Mammary epithelial cell (primary cell): ENCODE measurements at regions of chr16 and their contacts with region 1.

Region 1: GRCh38 chr16:48901712-48902374 is 291.9 kb upstream of the N4BP1 start:
- DNase-seq: no peak
- H3K4me3 ChIP-seq: no peak overlapping the region
- H3K27ac ChIP-seq: no peak overlapping the region
- H3K4me1 ChIP-seq: no peaks in the 10 kb centered on the region
- H3K27me3 ChIP-seq: peaks cover 1% of the 10 kb centered on the region
- CTCF ChIP-seq: no peak

Region 2: DNA sequence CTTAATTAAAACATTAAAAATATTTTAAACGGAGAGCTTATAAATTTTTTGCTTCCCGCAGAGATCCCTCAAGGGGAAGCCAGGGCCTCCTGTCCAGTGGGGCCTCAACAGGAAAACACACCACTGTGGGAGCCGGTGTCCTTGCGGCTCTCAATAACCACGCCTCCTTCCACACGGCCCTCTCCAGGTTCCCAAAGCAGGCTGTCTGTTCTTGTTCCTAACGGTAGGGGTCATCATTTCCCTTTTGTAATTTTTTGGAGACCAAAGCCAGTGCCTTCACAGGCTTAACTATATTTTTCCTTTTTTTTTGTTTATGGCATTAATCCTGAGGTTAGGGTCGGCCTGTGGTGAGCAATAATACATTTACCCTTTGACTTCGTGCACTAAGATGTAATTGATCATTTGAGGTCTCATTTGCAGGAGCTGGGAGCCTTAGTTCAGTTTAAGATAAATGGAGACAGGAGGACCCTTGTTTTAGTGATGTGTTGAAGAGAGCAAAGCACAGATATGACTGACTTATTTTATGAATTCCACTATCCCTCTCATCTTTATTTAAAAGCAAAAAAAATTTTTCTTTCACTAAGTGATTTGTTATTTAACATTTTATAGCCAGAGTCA is 214.3 kb before region 1 on chr16:
- CTCF ChIA-PET with region 1: no interaction called
- dilution Hi-C with region 1: no loop called
- in situ Hi-C with region 1: no loop called
- intact Hi-C with region 1: loop called (anchors 10 kb)
- DNase-seq: peak; percentile 60
- H3K4me3 ChIP-seq: no peak overlapping the region
- H3K27ac ChIP-seq: no peak overlapping the region
- H3K4me1 ChIP-seq: no peaks in the 10 kb centered on the region
- H3K27me3 ChIP-seq: no peaks in the 10 kb centered on the region
- CTCF ChIP-seq: peak; percentile 81 to 87

Region 3: DNA sequence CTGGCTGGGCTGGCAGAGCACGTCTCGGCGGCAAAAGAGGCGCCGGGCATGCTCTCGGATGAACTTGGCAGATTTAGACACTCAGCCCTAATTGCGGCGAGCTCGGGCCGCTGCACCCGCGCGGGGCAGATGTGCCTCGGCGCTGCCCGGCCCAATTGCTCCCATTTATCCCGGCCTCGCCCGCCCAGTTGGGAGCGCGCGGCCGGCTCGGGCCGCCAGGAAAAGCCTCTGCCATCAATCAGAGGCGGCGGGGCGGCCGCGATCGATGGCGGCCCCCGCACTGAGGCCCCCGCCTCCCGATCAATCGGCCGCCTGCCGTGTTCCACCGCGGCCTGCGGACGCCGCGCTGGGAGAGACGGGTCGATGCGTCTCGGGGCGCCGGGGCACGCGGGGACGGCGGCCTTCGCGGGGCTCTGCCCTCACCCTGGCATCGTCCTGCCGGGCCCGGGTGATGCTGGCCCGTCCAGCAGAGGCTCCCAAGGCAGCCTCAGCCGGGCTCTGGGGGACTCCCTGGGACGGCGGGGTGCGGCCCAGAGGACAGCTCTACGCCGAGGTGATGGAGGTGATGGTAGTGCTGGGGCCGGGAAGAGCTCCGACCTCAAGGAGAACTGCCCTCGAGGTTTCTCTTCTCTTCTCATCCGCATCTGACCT is 90.9 kb before region 1 on chr16:
- CTCF ChIA-PET with region 1: no interaction called
- dilution Hi-C with region 1: no loop called
- in situ Hi-C with region 1: no loop called
- intact Hi-C with region 1: no loop called
- DNase-seq: no peak
- H3K4me3 ChIP-seq: peak overlapping the region in 1 of 3 experiments; percentile 4
- H3K27ac ChIP-seq: no peak overlapping the region
- H3K4me1 ChIP-seq: no peaks in the 10 kb centered on the region
- H3K27me3 ChIP-seq: peaks cover 18% of the 10 kb centered on the region
- CTCF ChIP-seq: no peak

Region 4: GRCh38 chr16:48877946-48878345 is 23.9 kb before region 1 on chr16:
- CTCF ChIA-PET with region 1: no interaction called
- dilution Hi-C with region 1: no loop called
- in situ Hi-C with region 1: no loop called
- intact Hi-C with region 1: no loop called
- DNase-seq: no peak
- H3K4me3 ChIP-seq: no peak overlapping the region
- H3K27ac ChIP-seq: no peak overlapping the region
- H3K4me1 ChIP-seq: no peaks in the 10 kb centered on the region
- H3K27me3 ChIP-seq: no peaks in the 10 kb centered on the region
- CTCF ChIP-seq: no peak

Region 5: DNA sequence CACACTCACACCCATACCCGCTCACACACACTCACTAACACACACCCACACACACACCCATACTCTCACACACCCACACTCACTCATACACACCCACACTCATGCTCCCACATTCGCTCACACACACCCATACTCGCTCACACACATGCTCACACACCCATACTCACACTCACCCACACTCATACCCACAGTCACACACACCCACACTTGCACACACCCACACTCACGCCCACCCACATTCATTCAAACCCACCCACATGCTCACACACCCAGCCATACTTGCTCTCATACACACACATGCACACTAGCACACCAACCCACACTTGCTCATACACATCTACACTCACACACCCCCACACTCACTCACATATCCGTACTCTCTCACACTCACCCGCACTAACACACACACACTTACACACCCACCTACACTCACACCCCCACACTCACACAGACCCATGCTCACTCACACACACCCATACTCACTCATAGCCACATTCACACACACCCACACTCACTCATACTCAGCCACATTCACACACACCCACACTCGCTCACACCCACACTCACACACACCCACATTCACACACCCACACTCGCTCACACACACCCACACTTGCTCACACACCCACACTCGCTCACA is 30.5 kb after region 1 on chr16:
- CTCF ChIA-PET with region 1: no interaction called
- dilution Hi-C with region 1: no loop called
- in situ Hi-C with region 1: no loop called
- intact Hi-C with region 1: no loop called
- DNase-seq: no peak
- H3K4me3 ChIP-seq: no peak overlapping the region
- H3K27ac ChIP-seq: no peak overlapping the region
- H3K4me1 ChIP-seq: no peaks in the 10 kb centered on the region
- H3K27me3 ChIP-seq: no peaks in the 10 kb centered on the region
- CTCF ChIP-seq: no peak

Region 6: DNA sequence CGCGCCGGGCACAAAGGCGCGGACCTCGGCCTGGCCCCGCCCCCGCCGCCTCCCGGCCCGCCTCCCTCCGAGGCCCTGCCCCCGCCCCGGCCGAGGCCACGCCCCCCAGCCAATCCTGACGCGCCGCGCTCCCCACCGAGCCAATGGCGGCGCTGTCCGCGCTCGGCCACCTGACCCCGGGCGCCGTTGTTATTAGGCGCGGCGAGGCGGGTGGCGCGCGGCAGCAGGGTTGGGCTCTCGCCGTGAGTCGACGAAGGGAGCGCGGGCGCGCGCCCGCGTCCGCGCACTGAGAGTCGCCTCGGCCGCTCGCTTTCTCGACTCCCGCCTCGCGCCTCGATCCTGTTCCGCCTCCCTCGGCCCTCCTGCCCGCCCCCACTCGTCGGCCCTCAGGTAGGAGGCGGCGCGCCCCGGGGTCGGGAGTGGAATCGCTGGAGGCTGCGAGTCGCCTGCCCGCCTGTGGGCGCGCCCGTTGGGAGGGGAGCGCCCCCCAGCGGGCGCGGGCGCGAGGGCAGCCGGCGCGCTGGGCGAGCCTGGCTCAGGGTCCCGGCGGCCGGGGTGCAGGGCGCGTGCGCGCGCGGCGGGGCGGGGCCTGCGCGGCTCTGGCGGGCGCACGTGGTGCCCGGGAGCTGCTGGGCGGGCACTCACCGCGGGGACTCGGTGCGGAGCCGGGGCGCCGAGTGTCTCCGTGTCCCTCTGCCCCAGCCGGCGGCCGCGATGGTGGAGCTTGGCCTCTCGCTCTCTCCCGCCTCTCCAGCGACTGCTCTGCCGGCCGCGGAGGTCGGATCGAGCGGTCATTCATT is 380.2 kb after region 1 on chr16:
- CTCF ChIA-PET with region 1: no interaction called
- dilution Hi-C with region 1: no loop called
- in situ Hi-C with region 1: no loop called
- intact Hi-C with region 1: loop called (anchors 10 kb)
- DNase-seq: peak; percentile 42
- H3K4me3 ChIP-seq: peak overlapping the region in 2 of 3 experiments; percentile 24 to 28
- H3K27ac ChIP-seq: no peak overlapping the region
- H3K4me1 ChIP-seq: peaks cover 6% of the 10 kb centered on the region
- H3K27me3 ChIP-seq: peaks cover 59% of the 10 kb centered on the region
- CTCF ChIP-seq: no peak